PC-9 (cell line): ENCODE measurements at regions of chr9 and their contacts with region 1.

Region 1: DNA sequence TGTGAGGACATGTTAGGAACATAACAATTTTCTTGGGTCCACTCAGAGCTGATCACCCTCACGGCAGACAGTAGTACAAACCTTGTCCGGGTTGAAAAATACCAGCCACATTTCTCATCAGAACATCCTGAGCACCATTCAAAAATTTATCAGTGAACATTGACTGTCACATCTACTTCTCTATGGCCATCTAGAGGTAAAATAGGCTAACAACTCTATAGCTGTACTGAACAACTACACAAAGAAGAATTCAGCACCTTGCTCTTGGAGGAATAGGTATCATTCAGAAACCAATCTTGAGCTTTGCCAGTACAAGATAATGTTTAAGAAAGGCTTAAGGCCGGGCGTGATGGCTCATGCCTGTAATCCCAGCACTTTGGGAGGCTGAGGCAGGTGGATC is 52.6 kb downstream of the FOXB2 start:
- DNase-seq: no peak
- H3K4me3 ChIP-seq: no peak overlapping the region
- H3K27ac ChIP-seq: no peak overlapping the region
- H3K4me1 ChIP-seq: no peaks in the 10 kb centered on the region
- H3K27me3 ChIP-seq: peaks cover 41% of the 10 kb centered on the region; the same call in 1 of the 2 replicates
- CTCF ChIP-seq: no peak

Region 2: GRCh38 chr9:77099388-77099787 is 27.4 kb after region 1 on chr9:
- CTCF ChIA-PET with region 1: no interaction called
- POLR2A ChIA-PET with region 1: interaction called, 34 read pairs
- intact Hi-C with region 1: no loop called
- DNase-seq: no peak
- H3K4me3 ChIP-seq: no peak overlapping the region
- H3K27ac ChIP-seq: no peak overlapping the region
- H3K4me1 ChIP-seq: no peaks in the 10 kb centered on the region
- H3K27me3 ChIP-seq: peaks cover 37% of the 10 kb centered on the region
- CTCF ChIP-seq: no peak